ENCODE measurements at regions of chr11 and their contacts with region 1.

Region 1: DNA sequence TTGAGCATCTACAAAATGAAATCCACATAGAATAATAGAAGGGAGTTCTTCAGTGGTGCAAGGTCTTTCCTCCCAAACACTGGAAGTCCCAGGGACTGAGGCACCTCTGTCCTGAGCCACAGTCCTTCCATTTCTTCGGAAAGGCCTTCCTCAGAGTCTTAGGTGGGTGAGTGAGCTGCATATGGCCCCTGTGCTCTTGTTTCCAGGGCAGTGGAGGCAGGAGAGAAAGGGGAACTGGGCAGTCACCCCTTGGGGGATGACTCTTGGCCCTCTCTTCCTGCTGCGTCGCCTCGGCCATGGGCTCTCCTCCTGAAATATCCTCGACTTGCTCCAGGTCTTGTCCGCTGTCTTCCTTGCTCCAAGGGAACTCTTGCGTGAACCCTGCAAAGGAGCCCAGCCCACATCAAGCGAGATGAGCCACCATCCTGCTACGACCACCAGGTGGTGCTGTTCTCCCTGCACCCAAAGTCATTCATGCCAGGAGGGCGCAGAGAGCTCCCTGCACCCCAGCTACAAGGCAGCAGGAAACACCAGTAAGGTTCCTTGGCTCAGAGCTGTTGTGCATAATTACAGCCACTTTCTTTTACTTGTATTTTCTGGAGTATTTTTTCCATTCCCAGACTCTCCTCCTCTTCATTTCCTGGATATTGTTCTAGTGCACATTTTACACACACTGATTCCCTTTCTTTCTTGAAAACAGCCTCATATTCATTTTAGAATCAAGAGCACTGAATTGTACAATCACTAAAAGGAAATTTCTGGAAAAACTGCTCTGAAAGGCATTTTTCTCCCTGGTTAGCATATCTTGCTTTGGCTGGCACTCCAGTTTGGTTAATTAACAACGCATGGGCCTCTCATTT is 397.8 kb downstream of the OPCML start:
- DNase-seq: peak; percentile 84
- ATAC-seq: peak; percentile 97
- H3K4me3 Mint-ChIP-seq: no peak overlapping the region
- H3K27ac Mint-ChIP-seq: no peak overlapping the region
- H3K4me1 Mint-ChIP-seq: peaks cover 30% of the 10 kb centered on the region
- H3K27me3 Mint-ChIP-seq: no peaks in the 10 kb centered on the region
- CTCF ChIP-seq: peak; percentile 92

Region 2: DNA sequence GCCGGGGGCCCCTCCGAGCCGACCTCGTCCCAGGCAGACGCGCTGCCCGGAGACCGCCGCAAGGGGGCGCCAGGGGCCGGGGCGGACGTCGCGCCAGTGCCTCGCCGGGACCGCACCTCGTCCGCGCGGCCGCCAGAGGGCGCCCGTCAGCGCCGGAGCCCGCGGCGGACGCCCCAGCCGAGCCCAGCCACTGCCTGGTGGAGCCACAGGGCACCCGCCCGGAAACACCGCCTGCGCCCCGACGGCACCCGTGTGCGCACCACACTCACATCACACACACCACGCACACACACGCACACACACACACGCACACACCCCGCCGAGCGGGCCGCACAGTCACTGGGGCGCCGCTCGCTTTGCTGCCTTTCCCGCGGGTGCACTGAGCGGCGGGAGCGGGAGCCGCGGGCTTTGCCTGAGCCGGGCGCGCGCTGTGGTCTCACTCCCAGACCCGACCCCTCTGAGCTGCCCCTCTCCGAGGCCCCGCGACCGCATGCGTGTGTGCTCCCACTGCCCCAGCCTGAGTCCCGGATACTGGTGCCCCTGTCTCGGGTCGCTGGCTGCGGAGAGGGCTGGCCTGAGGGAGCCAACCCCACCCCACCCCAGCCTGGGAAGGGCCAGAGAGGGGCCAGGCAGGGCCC is 51.6 kb before region 1 on chr11:
- CTCF ChIA-PET with region 1: interaction called, 67 read pairs
- POLR2A ChIA-PET with region 1: no interaction called
- DNase-seq: peak; percentile 86
- ATAC-seq: peak; percentile 78
- H3K4me3 Mint-ChIP-seq: peak overlapping the region; percentile 71
- H3K27ac Mint-ChIP-seq: no peak overlapping the region
- H3K4me1 Mint-ChIP-seq: peaks cover 31% of the 10 kb centered on the region
- H3K27me3 Mint-ChIP-seq: peaks cover 22% of the 10 kb centered on the region
- CTCF ChIP-seq: peak; percentile 98

Region 3: GRCh38 chr11:133156986-133157745 is 22.6 kb after region 1 on chr11:
- CTCF ChIA-PET with region 1: interaction called, 114 read pairs
- POLR2A ChIA-PET with region 1: no interaction called
- DNase-seq: peak; percentile 62
- ATAC-seq: peak; percentile 78; the same call in 1 of the 2 replicates
- H3K4me3 Mint-ChIP-seq: no peak overlapping the region
- H3K27ac Mint-ChIP-seq: no peak overlapping the region
- H3K4me1 Mint-ChIP-seq: peaks cover 20% of the 10 kb centered on the region
- H3K27me3 Mint-ChIP-seq: no peaks in the 10 kb centered on the region; the same call in 1 of the 2 replicates
- CTCF ChIP-seq: no peak

Region 4: DNA sequence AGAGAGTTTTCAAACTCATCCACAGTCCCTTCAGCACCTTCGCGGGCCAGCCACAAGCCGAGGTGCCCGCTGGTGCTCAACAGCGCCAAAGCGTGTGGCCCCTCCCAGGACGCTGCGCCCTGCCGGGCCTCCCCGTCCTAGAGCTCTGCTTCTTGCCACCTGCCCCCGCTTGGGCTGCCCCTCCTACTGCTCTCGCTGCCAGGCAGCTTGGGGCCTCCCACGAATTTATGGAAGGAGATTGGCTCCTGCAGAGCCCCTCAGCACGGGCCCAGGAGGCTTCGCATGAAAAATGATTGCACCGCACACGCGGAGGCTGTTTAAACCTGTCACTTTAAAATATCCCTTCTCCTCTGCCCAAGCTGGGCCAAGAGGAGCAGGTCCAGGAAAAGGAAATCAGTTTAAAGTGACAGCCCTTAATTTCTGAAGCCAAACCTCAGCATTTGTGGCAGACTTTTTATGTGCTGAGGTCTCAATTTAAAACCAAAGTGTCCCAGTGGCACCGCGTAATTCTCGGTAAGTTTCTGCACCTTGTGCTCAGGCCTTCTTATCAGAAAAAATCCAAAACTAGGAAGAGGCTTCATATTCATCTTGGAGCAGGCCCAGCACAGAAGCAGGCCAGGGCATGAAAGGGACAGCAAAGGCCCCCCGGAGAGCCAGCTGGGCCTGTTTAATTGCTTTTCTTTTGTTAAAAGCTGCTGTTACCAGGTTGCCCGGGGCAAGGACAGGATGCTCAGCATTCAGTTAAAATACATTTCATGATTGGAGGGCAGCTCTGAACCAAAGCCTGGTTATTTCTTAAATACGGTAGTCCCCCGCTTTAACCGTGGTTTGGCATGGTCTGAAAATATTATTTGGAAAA is 94.2 kb after region 1 on chr11:
- CTCF ChIA-PET with region 1: interaction called, 19 read pairs
- POLR2A ChIA-PET with region 1: no interaction called
- DNase-seq: peak; percentile 82
- ATAC-seq: peak; percentile 84
- H3K4me3 Mint-ChIP-seq: peak overlapping the region; percentile 36
- H3K27ac Mint-ChIP-seq: no peak overlapping the region
- H3K4me1 Mint-ChIP-seq: peaks cover 49% of the 10 kb centered on the region
- H3K27me3 Mint-ChIP-seq: peaks cover 47% of the 10 kb centered on the region
- CTCF ChIP-seq: no peak

Region 5: GRCh38 chr11:133531971-133532651 is 397.6 kb after region 1 on chr11 and contains the start of gene OPCML:
- CTCF ChIA-PET with region 1: interaction called, 10 read pairs
- POLR2A ChIA-PET with region 1: no interaction called
- DNase-seq: peak; percentile 26
- ATAC-seq: peak; percentile 41
- H3K4me3 Mint-ChIP-seq: peak within 1 kb of the TSS; percentile 85
- H3K27ac Mint-ChIP-seq: 0 out of 2 replicates have a peak within 1 kb of the TSS, but pooled peaks have one; percentile 4
- H3K4me1 Mint-ChIP-seq: peaks cover 75% of the 10 kb centered on the region
- H3K27me3 Mint-ChIP-seq: peaks cover 30% of the 10 kb centered on the region
- CTCF ChIP-seq: no peak
- total RNA-seq, gene OPCML: 1.5 to 1.8 TPM (median 1.7 TPM) in 3 replicates

Measured in WTC11 (cell line).